Caco-2 (cell line): ENCODE measurements at regions of chr9 and their contacts with region 1.

Region 1: DNA sequence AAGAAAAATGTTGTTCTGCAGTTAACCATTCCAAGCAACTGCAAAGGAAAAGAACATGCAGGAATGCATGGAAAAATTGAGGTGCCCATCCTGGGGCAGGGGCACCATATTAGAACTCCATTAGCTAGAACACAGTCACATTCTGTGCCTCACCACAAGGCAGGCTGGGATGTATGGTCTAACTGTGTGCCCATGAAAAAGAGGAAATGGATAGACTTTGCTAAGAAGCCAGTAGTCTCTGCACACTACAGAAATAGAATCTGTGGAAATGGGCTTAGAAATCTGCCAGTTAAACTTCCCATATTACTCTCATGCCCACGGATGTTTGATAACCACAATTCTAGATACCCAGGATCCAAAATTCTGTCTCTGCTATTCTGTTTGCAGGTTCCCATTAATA is 423.8 kb upstream of the SMARCA2 start:
- DNase-seq: no peak
- H3K4me3 ChIP-seq: no peak overlapping the region
- H3K4me3 Mint-ChIP-seq: no peak overlapping the region
- H3K27ac Mint-ChIP-seq: no peak overlapping the region
- H3K4me1 ChIP-seq: no peaks in the 10 kb centered on the region
- H3K4me1 Mint-ChIP-seq: no peaks in the 10 kb centered on the region
- H3K27me3 ChIP-seq: no peaks in the 10 kb centered on the region
- H3K27me3 Mint-ChIP-seq: peaks cover 6% of the 10 kb centered on the region
- CTCF ChIP-seq: no peak

Region 2: GRCh38 chr9:1443450-1443849 is 147.9 kb before region 1 on chr9:
- CTCF ChIA-PET with region 1: no interaction called
- POLR2A ChIA-PET with region 1: no interaction called
- intact Hi-C with region 1: no loop called
- DNase-seq: no peak
- H3K4me3 ChIP-seq: no peak overlapping the region
- H3K4me3 Mint-ChIP-seq: no peak overlapping the region
- H3K27ac Mint-ChIP-seq: no peak overlapping the region
- H3K4me1 ChIP-seq: no peaks in the 10 kb centered on the region
- H3K4me1 Mint-ChIP-seq: no peaks in the 10 kb centered on the region
- H3K27me3 ChIP-seq: no peaks in the 10 kb centered on the region
- H3K27me3 Mint-ChIP-seq: peaks cover 3% of the 10 kb centered on the region
- CTCF ChIP-seq: no peak

Region 3: GRCh38 chr9:1659363-1660085 is 68.2 kb after region 1 on chr9:
- CTCF ChIA-PET with region 1: no interaction called
- POLR2A ChIA-PET with region 1: no interaction called
- intact Hi-C with region 1: loop called (anchors 2 kb)
- DNase-seq: no peak
- H3K4me3 ChIP-seq: no peak overlapping the region
- H3K4me3 Mint-ChIP-seq: no peak overlapping the region
- H3K27ac Mint-ChIP-seq: no peak overlapping the region
- H3K4me1 ChIP-seq: no peaks in the 10 kb centered on the region
- H3K4me1 Mint-ChIP-seq: no peaks in the 10 kb centered on the region
- H3K27me3 ChIP-seq: no peaks in the 10 kb centered on the region
- H3K27me3 Mint-ChIP-seq: peaks cover 3% of the 10 kb centered on the region
- CTCF ChIP-seq: no peak